GM12878 (cell line): ENCODE measurements at regions of chr10 and their contacts with region 1.

Region 1: DNA sequence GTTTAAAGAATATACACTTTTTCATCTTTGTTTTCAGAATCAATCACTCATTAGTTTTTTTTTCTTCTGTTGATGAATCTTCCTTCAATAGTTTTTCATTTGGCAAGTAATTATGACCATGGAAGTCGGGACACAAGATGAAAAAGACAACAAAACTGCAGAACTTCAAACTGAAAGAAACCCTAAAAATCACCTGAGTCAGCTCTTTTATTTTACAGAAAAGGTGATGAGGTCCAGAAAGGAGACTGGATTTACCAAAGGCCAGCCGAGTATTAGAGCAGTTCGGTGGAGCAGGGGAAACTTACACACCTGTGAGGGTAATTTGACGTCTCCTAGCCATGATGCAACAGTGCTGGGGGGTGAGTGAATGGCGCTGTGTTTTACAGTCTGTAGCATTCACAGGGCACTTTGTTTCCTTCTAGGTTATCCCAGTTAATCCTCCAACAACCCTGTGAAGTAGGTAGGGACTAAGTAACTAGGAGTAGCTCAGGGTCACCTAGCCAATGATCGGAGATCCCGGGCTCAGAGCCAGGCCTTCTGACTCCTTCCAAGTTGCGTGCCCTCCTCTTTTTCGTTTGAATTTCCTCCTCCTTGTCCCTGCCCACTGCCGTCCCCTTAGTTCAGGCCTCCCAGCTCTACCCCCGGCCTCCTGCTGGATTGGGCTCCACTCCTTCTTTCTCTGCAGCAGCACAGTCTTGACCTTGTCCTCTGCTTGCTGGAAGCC is 14.0 kb downstream of the RBM20 start:
- DNase-seq: no peak
- ATAC-seq: no peak
- H3K4me3 ChIP-seq: no peak overlapping the region
- H3K27ac ChIP-seq: no peak overlapping the region
- H3K4me1 ChIP-seq: peaks cover 3% of the 10 kb centered on the region
- H3K27me3 ChIP-seq: no peaks in the 10 kb centered on the region
- CTCF ChIP-seq: no peak
- EP300 ChIP-seq: no peak
- POLR2A ChIP-seq: no peak
- RAD21 ChIP-seq: no peak

Region 2: GRCh38 chr10:110671788-110672579 is 13.9 kb after region 1 on chr10:
- CTCF ChIA-PET with region 1: interaction called, 22 read pairs
- POLR2A ChIA-PET with region 1: interaction called, 3 read pairs
- RAD21 ChIA-PET with region 1: interaction called, 3 read pairs
- SMC1A ChIA-PET with region 1: interaction called, 14 read pairs
- in situ Hi-C with region 1: no loop called
- intact Hi-C with region 1: no loop called
- DNase-seq: peak; percentile 27
- ATAC-seq: peak; percentile 99
- H3K4me3 ChIP-seq: peak overlapping the region; percentile 74
- H3K27ac ChIP-seq: peak overlapping the region; percentile 62
- H3K4me1 ChIP-seq: no peaks in the 10 kb centered on the region
- H3K27me3 ChIP-seq: no peaks in the 10 kb centered on the region
- CTCF ChIP-seq: peak; percentile 99 to 100 (median 99)
- EP300 ChIP-seq: no peak
- POLR2A ChIP-seq: peak; percentile 80
- RAD21 ChIP-seq: peak; percentile 64